ENCODE measurements at regions of chr5 and their contacts with region 1.

Region 1: GRCh38 chr5:129664337-129664937 is 83.5 kb upstream of the MINAR2 start:
- DNase-seq: peak; percentile 17
- ATAC-seq: no peak
- H3K4me3 ChIP-seq: no peak overlapping the region
- H3K4me3 Mint-ChIP-seq: no peak overlapping the region
- H3K27ac ChIP-seq: no peak overlapping the region
- H3K27ac Mint-ChIP-seq: no peak overlapping the region
- H3K4me1 ChIP-seq: no peaks in the 10 kb centered on the region
- H3K4me1 Mint-ChIP-seq: no peaks in the 10 kb centered on the region
- H3K27me3 ChIP-seq: no peaks in the 10 kb centered on the region
- H3K27me3 Mint-ChIP-seq: no peaks in the 10 kb centered on the region
- CTCF ChIP-seq: peak; percentile 79

Region 2: DNA sequence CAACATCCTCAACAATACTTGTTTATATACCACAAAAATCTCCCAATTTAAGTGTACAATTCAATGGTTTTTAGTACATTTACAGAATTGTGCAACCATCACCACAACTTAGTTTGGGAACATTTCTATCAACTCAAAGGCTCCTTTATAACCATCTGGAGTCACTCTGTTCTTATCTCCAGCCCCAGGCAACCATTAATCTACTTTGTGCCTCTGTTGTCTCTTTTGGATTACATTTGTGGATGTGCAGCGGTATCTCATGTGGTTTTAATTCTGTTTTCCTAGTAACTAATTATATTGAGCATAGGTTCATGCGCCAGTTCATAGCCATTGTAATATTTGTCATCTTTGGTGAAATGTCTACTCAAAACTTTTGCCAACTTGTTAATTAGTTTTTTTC is 189.9 kb before region 1 on chr5:
- CTCF ChIA-PET with region 1: no interaction called
- POLR2A ChIA-PET with region 1: no interaction called
- intact Hi-C with region 1: no loop called
- DNase-seq: no peak
- ATAC-seq: no peak
- H3K4me3 ChIP-seq: no peak overlapping the region
- H3K4me3 Mint-ChIP-seq: no peak overlapping the region
- H3K27ac ChIP-seq: no peak overlapping the region
- H3K27ac Mint-ChIP-seq: no peak overlapping the region
- H3K4me1 ChIP-seq: no peaks in the 10 kb centered on the region
- H3K4me1 Mint-ChIP-seq: no peaks in the 10 kb centered on the region
- H3K27me3 ChIP-seq: no peaks in the 10 kb centered on the region
- H3K27me3 Mint-ChIP-seq: peaks cover 7% of the 10 kb centered on the region
- CTCF ChIP-seq: no peak

Region 3: DNA sequence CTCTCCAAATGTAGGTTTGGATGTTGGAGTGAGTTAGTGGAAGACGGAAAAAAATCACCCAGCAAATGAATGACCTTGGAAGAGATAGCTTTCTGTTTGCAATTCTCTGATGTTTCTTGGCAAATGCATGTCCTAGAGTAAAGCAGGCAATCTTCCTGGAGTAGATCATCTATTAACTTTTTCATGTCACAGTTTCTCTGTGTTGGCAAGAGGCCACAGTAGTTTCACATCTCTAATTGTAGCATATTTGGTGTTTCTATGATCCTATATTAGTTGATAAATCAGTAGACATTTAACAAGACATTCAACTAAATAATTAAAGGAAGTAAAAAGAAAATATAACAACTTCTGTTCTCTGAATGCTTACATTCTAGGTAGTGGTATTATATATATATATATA is 54.7 kb before region 1 on chr5:
- CTCF ChIA-PET with region 1: no interaction called
- POLR2A ChIA-PET with region 1: no interaction called
- intact Hi-C with region 1: no loop called
- DNase-seq: no peak
- ATAC-seq: no peak
- H3K4me3 ChIP-seq: no peak overlapping the region
- H3K4me3 Mint-ChIP-seq: no peak overlapping the region
- H3K27ac ChIP-seq: no peak overlapping the region
- H3K27ac Mint-ChIP-seq: no peak overlapping the region
- H3K4me1 ChIP-seq: no peaks in the 10 kb centered on the region
- H3K4me1 Mint-ChIP-seq: no peaks in the 10 kb centered on the region
- H3K27me3 ChIP-seq: no peaks in the 10 kb centered on the region
- H3K27me3 Mint-ChIP-seq: no peaks in the 10 kb centered on the region
- CTCF ChIP-seq: no peak

Region 4: DNA sequence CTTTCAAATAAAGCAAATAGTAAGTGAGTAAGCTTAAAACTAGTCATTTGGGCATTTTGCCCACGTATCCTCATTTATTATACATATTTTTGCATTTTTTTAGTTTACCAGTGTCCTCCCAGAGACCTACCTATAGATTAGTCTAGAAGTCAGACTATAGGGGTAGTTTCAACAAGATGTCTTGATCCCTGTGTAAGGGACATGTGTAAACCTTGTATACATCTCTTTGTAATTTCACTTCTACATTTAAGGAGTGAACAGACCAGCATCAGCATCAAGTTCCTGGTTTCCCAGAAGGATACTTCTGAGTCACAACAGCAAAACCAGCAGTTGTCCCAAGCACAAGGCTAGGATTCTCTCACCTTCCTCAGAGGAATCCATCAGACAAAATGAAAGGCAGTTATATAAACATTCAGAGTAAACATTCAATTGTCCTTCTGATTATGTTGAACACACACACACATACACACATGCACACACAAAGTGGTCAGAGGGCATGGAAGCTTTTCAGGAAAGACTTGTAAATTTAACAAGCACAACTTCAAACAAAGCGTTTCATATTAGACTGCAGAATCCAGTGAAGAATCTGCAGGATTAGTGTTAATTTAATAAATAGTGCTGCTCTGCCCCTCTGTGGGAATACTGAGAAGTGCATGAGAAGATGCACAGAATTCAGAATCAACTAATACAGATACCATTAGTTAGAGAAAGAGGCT is 1445.3 kb after region 1 on chr5:
- CTCF ChIA-PET with region 1: no interaction called
- POLR2A ChIA-PET with region 1: no interaction called
- intact Hi-C with region 1: loop called (anchors 5 kb)
- DNase-seq: peak; percentile 53
- ATAC-seq: peak; percentile 39
- H3K4me3 ChIP-seq: no peak overlapping the region
- H3K4me3 Mint-ChIP-seq: no peak overlapping the region
- H3K27ac ChIP-seq: no peak overlapping the region
- H3K27ac Mint-ChIP-seq: no peak overlapping the region
- H3K4me1 ChIP-seq: no peaks in the 10 kb centered on the region
- H3K4me1 Mint-ChIP-seq: no peaks in the 10 kb centered on the region
- H3K27me3 ChIP-seq: no peaks in the 10 kb centered on the region
- H3K27me3 Mint-ChIP-seq: no peaks in the 10 kb centered on the region
- CTCF ChIP-seq: peak; percentile 87